Naive thymus-derived CD4-positive, alpha-beta T cell (primary cell): ENCODE measurements at regions of chr5 and their contacts with region 1.

Region 1: DNA sequence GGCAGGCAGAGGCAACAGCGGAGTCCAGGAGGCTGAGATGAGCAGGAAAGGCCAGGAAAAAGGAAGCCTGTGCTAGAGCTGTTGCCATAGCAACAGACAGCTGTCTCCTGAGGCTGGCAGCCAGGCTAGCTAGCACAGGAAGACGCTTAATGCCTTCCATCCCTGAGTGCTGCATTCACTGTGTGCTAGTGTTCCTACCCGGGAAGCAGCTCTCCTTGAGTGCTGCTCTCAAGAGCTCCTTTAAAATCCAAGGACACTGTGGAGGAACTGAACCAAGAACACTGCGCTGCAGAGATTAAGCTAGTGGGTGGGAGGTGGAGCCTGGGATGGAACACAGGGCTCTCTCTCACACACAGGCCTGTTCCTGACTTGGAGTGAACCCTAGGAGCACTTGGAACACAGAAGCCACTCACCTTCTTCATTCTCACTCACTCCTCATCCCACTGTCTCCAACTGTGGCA is 53.5 kb upstream of the IL7R start:
- DNase-seq: peak in 3 of 9 donors; percentile 33 to 34 (median 34)
- ATAC-seq: peak; percentile 61
- H3K4me3 ChIP-seq: peak overlapping the region; percentile 0
- H3K4me3 Mint-ChIP-seq: peak overlapping the region; percentile 42 to 72 (median 64)
- H3K27ac ChIP-seq: no peak overlapping the region
- H3K27ac Mint-ChIP-seq: peak overlapping the region; percentile 44 to 89 (median 82)
- H3K4me1 ChIP-seq: peaks cover 36 to 54% of the 10 kb centered on the region in 2 donors
- H3K4me1 Mint-ChIP-seq: peaks cover 31 to 90% (median 82%) of the 10 kb centered on the region in 7 donors
- H3K27me3 ChIP-seq: no peaks in the 10 kb centered on the region
- H3K27me3 Mint-ChIP-seq: no peaks in the 10 kb centered on the region

Region 2: GRCh38 chr5:35830587-35830986 is 27.4 kb after region 1 on chr5:
- CTCF ChIA-PET with region 1: interaction called, 3 read pairs
- POLR2A ChIA-PET with region 1: interaction called, 126 read pairs
- intact Hi-C with region 1: no loop called
- DNase-seq: peak in 7 of 9 donors; percentile 77 to 92 (median 89)
- ATAC-seq: peak; percentile 94
- H3K4me3 ChIP-seq: peak overlapping the region; percentile 4
- H3K4me3 Mint-ChIP-seq: peak overlapping the region; percentile 1 to 78 (median 70)
- H3K27ac ChIP-seq: peak overlapping the region; percentile 59
- H3K27ac Mint-ChIP-seq: peak overlapping the region; percentile 82 to 98 (median 89)
- H3K4me1 ChIP-seq: peaks cover 69 to 78% of the 10 kb centered on the region in 2 donors
- H3K4me1 Mint-ChIP-seq: peaks cover 53 to 99% (median 90%) of the 10 kb centered on the region in 7 donors
- H3K27me3 ChIP-seq: no peaks in the 10 kb centered on the region
- H3K27me3 Mint-ChIP-seq: no peaks in the 10 kb centered on the region

Region 3: DNA sequence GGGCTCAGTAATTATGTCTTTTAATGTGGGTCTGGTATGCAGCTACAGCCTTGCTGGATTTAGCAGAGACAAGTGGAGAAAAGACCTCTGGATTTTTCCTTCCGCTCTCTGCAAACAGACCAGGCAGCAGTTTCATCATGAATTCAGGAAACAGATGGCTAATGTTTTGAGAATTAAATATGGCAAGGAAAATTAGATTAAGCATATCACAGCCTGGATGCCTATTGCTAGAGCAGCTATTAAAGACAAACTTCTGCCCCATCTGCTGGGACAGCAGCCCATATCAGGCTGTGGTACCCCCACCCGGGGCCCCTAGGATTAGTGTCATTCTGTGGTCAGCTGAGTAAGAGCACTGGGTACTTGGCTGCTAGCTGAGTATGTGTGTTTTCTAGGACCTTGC is 354.9 kb after region 1 on chr5:
- CTCF ChIA-PET with region 1: no interaction called
- POLR2A ChIA-PET with region 1: no interaction called
- intact Hi-C with region 1: no loop called
- DNase-seq: no peak
- ATAC-seq: no peak
- H3K4me3 ChIP-seq: no peak overlapping the region
- H3K4me3 Mint-ChIP-seq: no peak overlapping the region
- H3K27ac ChIP-seq: no peak overlapping the region
- H3K27ac Mint-ChIP-seq: no peak overlapping the region
- H3K4me1 ChIP-seq: peaks cover 5 to 6% of the 10 kb centered on the region in 2 donors
- H3K4me1 Mint-ChIP-seq: peaks cover 28 to 80% (median 66%) of the 10 kb centered on the region in 7 donors
- H3K27me3 ChIP-seq: no peaks in the 10 kb centered on the region
- H3K27me3 Mint-ChIP-seq: no peaks in the 10 kb centered on the region

Region 4: DNA sequence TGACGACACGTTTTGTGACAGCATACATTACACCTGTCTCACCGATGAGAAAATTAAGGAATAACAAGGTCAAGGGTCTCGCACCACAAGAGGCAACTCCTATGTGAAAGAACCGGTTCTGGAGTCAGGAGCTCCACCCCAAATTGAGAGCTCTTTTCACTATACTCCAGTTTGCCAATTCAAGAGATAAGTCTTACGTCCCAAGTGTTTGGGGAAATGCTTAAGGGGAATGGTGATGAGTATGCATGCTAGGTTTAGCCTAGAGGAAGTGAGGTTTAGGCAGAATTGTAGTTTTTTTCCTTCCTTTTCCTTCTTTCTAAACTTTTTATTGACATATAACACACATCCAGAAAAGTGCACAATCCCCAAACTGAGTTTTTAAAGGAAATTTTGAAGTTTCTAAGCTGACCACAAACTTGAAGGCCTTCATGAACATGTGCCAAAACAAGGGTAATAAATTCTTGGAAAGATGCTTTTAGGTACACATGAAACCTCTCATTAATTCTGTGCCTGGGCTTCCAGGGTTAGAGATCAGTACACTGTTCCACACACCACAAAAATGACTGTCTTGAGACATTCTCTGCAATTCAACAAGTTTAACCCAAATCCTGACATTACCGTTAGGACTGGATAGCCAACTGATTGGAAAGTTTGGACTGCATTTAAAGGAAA is 675.6 kb after region 1 on chr5:
- CTCF ChIA-PET with region 1: no interaction called
- POLR2A ChIA-PET with region 1: no interaction called
- intact Hi-C with region 1: no loop called
- DNase-seq: no peak
- ATAC-seq: no peak
- H3K4me3 ChIP-seq: no peak overlapping the region
- H3K4me3 Mint-ChIP-seq: no peak overlapping the region
- H3K27ac ChIP-seq: no peak overlapping the region
- H3K27ac Mint-ChIP-seq: no peak overlapping the region
- H3K4me1 ChIP-seq: no peaks in the 10 kb centered on the region
- H3K4me1 Mint-ChIP-seq: no peaks in the 10 kb centered on the region
- H3K27me3 ChIP-seq: no peaks in the 10 kb centered on the region
- H3K27me3 Mint-ChIP-seq: no peaks in the 10 kb centered on the region